H1 (cell line): ENCODE measurements at regions of chr3 and their contacts with region 1.

Region 1: DNA sequence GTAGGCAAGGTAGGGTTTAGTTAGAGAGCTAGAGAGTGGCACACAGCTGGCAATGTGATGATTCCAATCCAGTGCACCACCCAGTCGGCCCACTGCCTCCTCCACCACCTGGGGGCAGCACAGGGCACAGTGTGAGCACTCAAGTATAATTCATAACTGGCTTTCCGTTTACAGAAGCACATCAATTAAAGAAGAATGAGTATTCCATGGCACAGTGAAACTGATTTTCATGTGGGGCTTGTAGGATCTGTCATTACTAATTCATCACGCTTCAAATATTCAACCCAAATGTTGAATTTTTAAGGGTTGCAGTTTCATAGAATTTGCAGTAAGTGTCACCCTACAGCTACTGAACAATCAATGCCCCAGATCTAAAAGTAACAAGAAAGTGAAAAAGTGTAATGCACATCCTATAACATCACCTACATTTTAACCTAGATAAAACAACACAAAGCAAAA is 149.9 kb downstream of the IGSF11 start:
- DNase-seq: peak in 1 of 2 experiments; percentile 79
- H3K4me3 ChIP-seq: no peak overlapping the region; a peak in 1 of 8 replicates
- H3K27ac ChIP-seq: no peak overlapping the region
- H3K4me1 ChIP-seq: 0 out of 7 replicates have a peak, but pooled peaks cover 0 to 3% (median 0%) of the 10 kb centered on the region in 4 experiments
- H3K27me3 ChIP-seq: no peaks in the 10 kb centered on the region
- CTCF ChIP-seq: peak; percentile 67 to 97 (median 90)
- EP300 ChIP-seq: no peak
- POLR2A ChIP-seq: no peak
- RAD21 ChIP-seq: peak; percentile 58 to 67

Region 2: GRCh38 chr3:118772547-118773011 is 112.2 kb before region 1 on chr3:
- CTCF ChIA-PET with region 1: no interaction called
- POLR2A ChIA-PET with region 1: no interaction called
- DNase-seq: no peak
- H3K4me3 ChIP-seq: no peak overlapping the region
- H3K27ac ChIP-seq: no peak overlapping the region; the same call in 1 of the 2 replicates
- H3K4me1 ChIP-seq: peaks cover 0 to 9% (median 5%) of the 10 kb centered on the region in 4 experiments; a peak in 2 of 7 replicates
- H3K27me3 ChIP-seq: no peaks in the 10 kb centered on the region
- CTCF ChIP-seq: no peak
- EP300 ChIP-seq: no peak
- POLR2A ChIP-seq: no peak
- RAD21 ChIP-seq: no peak

Region 3: DNA sequence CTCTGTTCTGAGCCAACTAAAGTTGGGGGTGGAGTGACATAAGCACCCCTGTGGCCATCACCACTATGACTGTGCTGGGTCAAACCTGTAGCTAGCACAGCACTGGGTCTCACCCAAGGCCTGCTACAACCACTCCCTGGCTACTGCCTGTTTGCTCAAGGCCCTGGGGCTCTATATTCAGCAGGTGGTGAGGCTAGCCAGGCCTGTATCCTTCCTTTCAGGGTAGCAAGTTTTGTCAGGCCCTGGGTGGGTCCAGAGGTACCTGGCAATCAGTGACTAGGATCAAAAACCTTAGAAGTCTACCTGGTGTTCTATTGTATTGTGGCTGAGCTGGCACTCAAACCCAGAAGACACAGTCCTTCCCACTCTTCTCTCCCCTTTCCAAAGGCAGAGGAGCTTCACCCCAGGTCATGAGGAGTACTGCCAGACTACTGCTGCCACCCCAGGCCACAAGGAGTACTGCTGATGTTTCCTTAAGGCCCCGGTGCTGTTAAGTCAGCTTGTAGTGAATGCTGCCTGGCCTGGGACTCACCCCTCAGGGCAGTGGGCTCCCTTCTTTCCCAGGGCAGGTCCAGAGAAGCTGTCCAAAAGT is 20.9 kb before region 1 on chr3:
- CTCF ChIA-PET with region 1: interaction called, 10 read pairs
- POLR2A ChIA-PET with region 1: no interaction called
- DNase-seq: peak in 1 of 2 experiments; percentile 59
- H3K4me3 ChIP-seq: no peak overlapping the region
- H3K27ac ChIP-seq: no peak overlapping the region
- H3K4me1 ChIP-seq: no peaks in the 10 kb centered on the region
- H3K27me3 ChIP-seq: no peaks in the 10 kb centered on the region
- CTCF ChIP-seq: peak; percentile 46 to 75 (median 67)
- EP300 ChIP-seq: no peak
- POLR2A ChIP-seq: no peak
- RAD21 ChIP-seq: peak; percentile 40 to 58; a peak in 3 of 4 replicates

Region 4: DNA sequence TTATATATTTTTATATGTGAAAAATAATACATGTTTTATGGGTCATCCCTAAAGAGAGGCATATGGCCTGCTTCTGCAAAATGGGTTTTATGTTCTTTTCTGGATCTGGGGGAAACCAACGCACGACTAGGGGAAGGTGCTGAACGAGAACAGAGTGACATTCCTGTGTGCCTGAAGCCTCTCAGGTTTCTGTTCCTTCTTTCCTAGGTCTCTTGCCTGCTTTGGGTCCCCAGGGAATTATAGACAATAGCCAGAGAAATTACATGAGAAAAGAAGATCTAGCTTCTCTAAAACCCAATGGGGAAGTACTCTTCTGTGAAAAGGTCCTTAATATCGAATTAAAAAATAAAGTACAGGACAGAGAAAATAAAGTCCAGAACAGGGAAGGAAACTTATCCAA is 83.3 kb after region 1 on chr3:
- CTCF ChIA-PET with region 1: interaction called, 14 read pairs
- POLR2A ChIA-PET with region 1: no interaction called
- DNase-seq: no peak
- H3K4me3 ChIP-seq: no peak overlapping the region
- H3K27ac ChIP-seq: no peak overlapping the region
- H3K4me1 ChIP-seq: peaks cover 0 to 15% (median 10%) of the 10 kb centered on the region in 4 experiments; a peak in 3 of 7 replicates
- H3K27me3 ChIP-seq: no peaks in the 10 kb centered on the region
- CTCF ChIP-seq: no peak
- EP300 ChIP-seq: no peak
- POLR2A ChIP-seq: no peak
- RAD21 ChIP-seq: no peak

Region 5: DNA sequence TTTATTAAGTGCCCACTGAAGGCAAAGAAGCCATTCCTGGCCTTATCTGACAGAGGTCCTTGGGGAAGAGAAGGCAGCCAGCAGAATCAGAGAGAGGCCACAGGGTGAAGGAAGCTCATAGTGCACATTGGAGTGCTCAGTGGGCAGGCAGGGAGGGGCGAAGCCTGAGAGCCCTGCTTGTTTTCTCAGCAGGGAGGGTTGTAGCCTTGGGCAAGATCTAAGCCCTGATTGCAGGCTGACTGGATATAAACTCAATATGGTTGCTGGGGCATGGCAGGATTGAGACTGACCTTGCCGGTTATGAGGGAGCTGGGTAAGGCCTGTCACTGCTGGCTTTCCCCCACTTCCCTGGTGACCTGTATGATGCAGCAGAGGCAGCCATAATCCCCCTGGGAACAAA is 157.4 kb after region 1 on chr3:
- CTCF ChIA-PET with region 1: interaction called, 84 read pairs
- POLR2A ChIA-PET with region 1: no interaction called
- DNase-seq: no peak
- H3K4me3 ChIP-seq: no peak overlapping the region
- H3K27ac ChIP-seq: no peak overlapping the region
- H3K4me1 ChIP-seq: no peaks in the 10 kb centered on the region
- H3K27me3 ChIP-seq: no peaks in the 10 kb centered on the region
- CTCF ChIP-seq: no peak
- EP300 ChIP-seq: no peak
- POLR2A ChIP-seq: no peak
- RAD21 ChIP-seq: no peak

Region 6: GRCh38 chr3:119084371-119085072 is 199.7 kb after region 1 on chr3:
- CTCF ChIA-PET with region 1: interaction called, 619 read pairs
- POLR2A ChIA-PET with region 1: no interaction called
- DNase-seq: no peak
- H3K4me3 ChIP-seq: no peak overlapping the region
- H3K27ac ChIP-seq: no peak overlapping the region
- H3K4me1 ChIP-seq: no peaks in the 10 kb centered on the region
- H3K27me3 ChIP-seq: no peaks in the 10 kb centered on the region
- CTCF ChIP-seq: no peak
- EP300 ChIP-seq: no peak
- POLR2A ChIP-seq: no peak
- RAD21 ChIP-seq: no peak

Region 7: GRCh38 chr3:119122109-119122749 is 237.5 kb after region 1 on chr3:
- CTCF ChIA-PET with region 1: interaction called, 11 read pairs
- POLR2A ChIA-PET with region 1: no interaction called
- DNase-seq: no peak
- H3K4me3 ChIP-seq: no peak overlapping the region
- H3K27ac ChIP-seq: no peak overlapping the region
- H3K4me1 ChIP-seq: peaks cover 1 to 7% (median 3%) of the 10 kb centered on the region in 4 experiments; a peak in 5 of 7 replicates
- H3K27me3 ChIP-seq: no peaks in the 10 kb centered on the region
- CTCF ChIP-seq: peak in 1 of 3 experiments; percentile 15; a peak in 1 of 4 replicates
- EP300 ChIP-seq: no peak
- POLR2A ChIP-seq: no peak
- RAD21 ChIP-seq: peak in 1 of 2 experiments; percentile 16; a peak in 1 of 4 replicates